A549 (cell line): ENCODE measurements at regions of chr4 and their contacts with region 1.

Region 1: DNA sequence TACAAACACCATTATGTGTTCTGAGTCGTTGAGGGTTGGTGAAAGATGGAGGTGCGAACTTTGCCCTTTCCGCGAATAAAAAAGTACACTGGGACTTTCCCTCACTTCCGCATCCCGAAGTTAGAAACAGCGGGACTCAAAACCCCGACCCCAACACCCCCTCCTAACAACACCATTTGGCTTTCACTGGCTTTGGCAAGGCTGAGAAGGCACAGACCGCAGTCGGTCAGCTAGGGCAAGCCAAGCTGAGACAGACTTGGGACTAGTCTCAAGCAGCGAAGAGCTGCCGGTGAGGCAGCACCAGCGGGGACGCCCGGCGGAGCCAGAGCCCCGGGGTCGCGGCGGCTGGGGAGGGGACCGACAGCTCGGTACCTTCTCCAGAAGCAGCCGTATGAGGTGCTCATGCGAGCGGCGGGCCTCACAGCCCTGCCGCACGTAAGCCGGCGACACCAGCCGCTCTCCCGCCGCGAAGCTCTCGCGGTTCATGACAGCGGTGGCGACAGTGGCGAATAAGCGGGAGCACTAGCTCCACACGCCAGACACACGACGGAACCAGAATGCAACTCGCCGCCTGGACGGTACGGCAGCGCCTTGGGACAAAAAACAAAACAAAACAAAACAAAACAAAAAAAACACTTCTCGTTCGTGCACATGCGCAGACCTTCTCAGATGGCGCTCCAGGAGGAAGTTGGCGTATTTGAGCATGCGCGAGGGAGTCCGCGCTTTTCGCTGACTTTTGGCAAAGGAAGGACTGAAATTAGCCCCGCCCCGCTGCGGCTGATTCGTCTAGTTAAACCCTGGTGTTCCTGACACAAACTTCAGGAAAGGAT is at the start of gene SEPSECS:
- DNase-seq: peak; percentile 65 to 95
- ATAC-seq: peak; percentile 87 to 92
- H3K4me3 ChIP-seq: peak within 1 kb of the TSS; percentile 88
- H3K27ac ChIP-seq: peak within 1 kb of the TSS; percentile 88 to 91
- H3K4me1 ChIP-seq: 0 out of 3 replicates have a peak, but pooled peaks cover 4% of the 10 kb centered on the region
- CTCF ChIP-seq: no peak
- EP300 ChIP-seq: no peak
- POLR2A ChIP-seq: peak; percentile 62
- RAD21 ChIP-seq: no peak
- polyA plus RNA-seq, gene SEPSECS: 7.4 and 9.7 TPM in 2 replicates

Region 2: GRCh38 chr4:25172961-25173915 is 13.1 kb after region 1 on chr4:
- CTCF ChIA-PET with region 1: no interaction called
- POLR2A ChIA-PET with region 1: interaction called, 13 read pairs
- DNase-seq: peak; percentile 67 to 72
- ATAC-seq: peak; percentile 98 to 99
- H3K4me3 ChIP-seq: no peak overlapping the region
- H3K27ac ChIP-seq: peak overlapping the region; percentile 15 to 65; a peak in 4 of 6 replicates
- H3K4me1 ChIP-seq: peaks cover 21% of the 10 kb centered on the region
- CTCF ChIP-seq: no peak
- EP300 ChIP-seq: no peak
- POLR2A ChIP-seq: no peak
- RAD21 ChIP-seq: no peak

Region 3: GRCh38 chr4:25400699-25401399 is 240.8 kb after region 1 on chr4:
- CTCF ChIA-PET with region 1: no interaction called
- POLR2A ChIA-PET with region 1: no interaction called
- DNase-seq: peak; percentile 14 to 23
- ATAC-seq: peak; percentile 54 to 77; a peak in 5 of 6 replicates
- H3K4me3 ChIP-seq: no peak overlapping the region
- H3K27ac ChIP-seq: peak overlapping the region in 1 of 2 experiments; percentile 63; a peak in 1 of 6 replicates
- H3K4me1 ChIP-seq: peaks cover 18% of the 10 kb centered on the region
- CTCF ChIP-seq: no peak
- EP300 ChIP-seq: no peak
- POLR2A ChIP-seq: no peak
- RAD21 ChIP-seq: no peak